Right ventricle myocardium inferior (tissue), 1 donor: ENCODE measurements at regions of chr5 and their contacts with region 1.

Region 1: GRCh38 chr5:172188033-172188892 is at the start of gene STK10:
- DNase-seq: peak; percentile 96
- ATAC-seq: peak; percentile 97
- total RNA-seq, gene STK10: 8.9 TPM

Region 2: DNA sequence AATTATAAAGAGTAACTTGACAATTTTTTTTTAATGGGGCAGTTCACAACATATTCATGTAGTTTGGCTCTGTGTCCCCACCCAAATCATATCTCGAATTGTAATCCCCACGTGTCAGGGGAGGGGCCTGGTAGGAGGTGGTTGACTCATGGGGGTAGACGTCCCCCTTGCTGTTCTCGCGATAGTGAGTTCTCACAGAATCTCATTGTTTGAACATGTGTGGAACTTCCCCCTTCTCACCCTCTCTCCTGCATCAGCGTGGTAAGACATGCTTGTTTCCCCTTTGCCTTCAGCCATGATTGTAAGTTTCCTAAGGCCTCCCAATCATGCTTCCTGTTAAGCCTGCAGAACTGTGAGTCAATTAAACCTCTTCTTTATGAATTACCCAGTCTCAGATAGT is 222.5 kb before region 1 on chr5:
- intact Hi-C with region 1: no loop called
- DNase-seq: no peak
- ATAC-seq: no peak

Region 3: DNA sequence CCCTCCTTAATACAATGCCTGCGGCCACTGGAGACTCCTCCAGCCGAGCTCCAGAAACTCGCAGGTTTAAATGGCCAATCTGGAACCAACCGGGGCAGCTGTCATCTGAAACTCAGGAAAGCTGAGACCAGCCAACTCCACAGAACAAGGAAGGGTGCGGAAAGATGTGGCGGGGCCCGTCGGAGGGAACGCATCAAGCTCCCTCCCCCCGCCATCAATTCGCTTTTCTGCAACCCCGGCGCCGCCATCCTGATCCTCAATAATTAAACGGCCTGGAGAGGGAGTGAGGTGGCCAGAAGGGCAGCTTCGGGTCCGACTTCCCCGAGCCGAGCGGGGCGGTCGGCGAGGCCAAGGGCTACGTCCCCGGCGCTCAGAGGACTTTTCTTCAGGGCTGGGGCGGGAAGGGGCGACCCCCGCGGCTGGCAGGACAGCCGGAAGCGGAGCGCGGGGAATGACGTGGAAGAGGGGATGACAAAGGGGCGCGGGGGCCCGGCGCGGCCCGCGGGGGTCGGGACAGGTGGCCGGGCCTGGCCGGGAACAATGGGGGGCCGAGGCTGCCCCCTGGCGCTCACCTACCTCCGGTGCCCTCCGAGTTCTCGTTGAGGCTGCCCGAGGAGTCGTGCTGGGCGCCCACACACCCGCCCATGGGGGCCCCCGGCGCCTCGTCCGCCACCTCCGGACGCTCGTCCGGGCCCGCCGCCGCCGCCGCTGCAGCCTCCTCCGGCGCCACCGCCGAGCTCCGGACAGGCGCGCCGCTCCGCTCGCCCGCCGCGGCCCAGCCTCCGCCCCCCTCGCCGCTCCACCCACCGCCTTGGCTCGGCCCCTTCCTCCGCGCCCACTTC is 95.0 kb after region 1 on chr5 and contains the start of gene UBTD2:
- intact Hi-C with region 1: loop called (anchors 2 kb)
- DNase-seq: peak; percentile 94
- ATAC-seq: peak; percentile 91
- total RNA-seq, gene UBTD2: 8.6 TPM